CD4-positive, alpha-beta T cell (primary cell): ENCODE measurements at regions of chr13 and their contacts with region 1.

Region 1: DNA sequence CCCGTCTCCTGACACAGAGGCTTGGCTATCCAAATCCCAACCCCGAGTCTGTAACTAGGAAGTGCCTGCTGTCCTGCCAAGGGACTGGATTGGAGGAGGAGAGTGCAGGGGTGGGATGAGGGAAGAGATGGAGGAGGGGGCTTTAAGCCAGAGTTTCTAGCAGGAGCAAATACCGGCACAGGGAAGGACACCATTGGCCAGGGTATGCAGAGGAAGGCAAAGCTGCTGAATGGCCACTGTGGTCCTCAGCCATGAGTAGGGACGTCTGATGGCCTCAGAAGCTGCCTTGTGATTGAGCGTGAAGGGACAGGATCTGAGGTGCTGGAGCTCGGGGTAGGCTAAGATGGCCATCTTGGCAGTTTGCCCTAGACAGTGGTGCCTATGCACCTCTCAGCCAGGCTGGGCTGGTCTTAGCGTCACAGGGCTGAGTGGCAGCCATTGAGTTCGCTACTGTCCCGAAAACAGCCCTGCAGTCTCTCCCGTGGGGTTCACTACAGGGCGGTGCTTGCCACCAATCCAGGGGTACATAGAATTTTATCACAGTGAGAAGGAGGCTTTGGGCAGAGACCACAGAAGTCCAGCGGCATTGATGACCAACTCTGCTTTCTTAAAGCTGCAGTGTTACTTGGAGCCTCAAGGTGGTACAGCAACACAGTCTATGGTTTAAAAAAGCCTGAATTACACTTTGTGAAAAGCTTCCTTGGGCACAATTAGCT is 61.8 kb downstream of the AKAP11 start:
- DNase-seq: peak in 4 of 14 experiments; percentile 10 to 49 (median 44)
- ATAC-seq: peak; percentile 60
- H3K4me3 ChIP-seq: no peak overlapping the region
- H3K4me3 Mint-ChIP-seq: no peak overlapping the region
- H3K27ac ChIP-seq: no peak overlapping the region
- H3K27ac Mint-ChIP-seq: no peak overlapping the region
- H3K4me1 ChIP-seq: peaks cover 11% of the 10 kb centered on the region
- H3K4me1 Mint-ChIP-seq: peaks cover 25% of the 10 kb centered on the region
- H3K27me3 ChIP-seq: no peaks in the 10 kb centered on the region
- H3K27me3 Mint-ChIP-seq: no peaks in the 10 kb centered on the region
- CTCF ChIP-seq: peak; percentile 58

Region 2: DNA sequence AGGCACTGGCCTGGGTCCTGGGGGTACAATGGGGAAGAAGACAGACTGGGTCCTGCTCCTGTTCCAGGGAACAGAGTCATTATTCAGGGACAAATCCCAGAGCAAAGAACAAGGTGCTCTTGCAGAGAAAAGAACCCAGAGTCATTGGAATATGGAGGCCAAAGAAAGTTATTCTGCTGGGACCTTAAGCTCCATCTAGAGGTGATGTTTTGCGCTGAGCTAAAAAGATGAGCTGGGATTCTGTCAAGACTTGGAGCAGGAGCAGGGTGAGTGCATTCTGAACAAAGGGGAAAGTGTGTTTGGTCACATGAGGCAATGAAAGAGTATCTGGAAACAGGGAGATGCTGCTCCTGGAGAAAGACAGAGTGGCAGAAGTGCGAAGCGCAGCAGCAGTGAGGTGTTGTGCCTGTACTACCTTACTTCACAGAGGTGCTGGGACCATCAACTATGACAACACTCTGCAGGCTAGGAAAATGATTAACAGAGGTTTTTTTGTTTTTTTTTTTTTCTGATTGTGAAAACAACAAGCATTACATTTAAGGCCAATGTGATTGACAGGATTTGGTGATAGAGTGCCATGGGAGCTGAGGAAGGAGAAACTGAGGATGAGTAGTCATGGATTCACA is 144.9 kb after region 1 on chr13:
- CTCF ChIA-PET with region 1: interaction called, 9 read pairs
- POLR2A ChIA-PET with region 1: interaction called, 3 read pairs
- intact Hi-C with region 1: loop called (anchors 1 to 2 kb)
- DNase-seq: peak in 3 of 14 experiments; percentile 31 to 47 (median 34)
- ATAC-seq: no peak
- H3K4me3 ChIP-seq: no peak overlapping the region
- H3K4me3 Mint-ChIP-seq: no peak overlapping the region
- H3K27ac ChIP-seq: no peak overlapping the region
- H3K27ac Mint-ChIP-seq: no peak overlapping the region
- H3K4me1 ChIP-seq: no peaks in the 10 kb centered on the region
- H3K4me1 Mint-ChIP-seq: no peaks in the 10 kb centered on the region
- H3K27me3 ChIP-seq: no peaks in the 10 kb centered on the region
- H3K27me3 Mint-ChIP-seq: no peaks in the 10 kb centered on the region
- CTCF ChIP-seq: peak; percentile 27

Region 3: GRCh38 chr13:42594970-42595571 is 261.3 kb after region 1 on chr13:
- CTCF ChIA-PET with region 1: interaction called, 3 read pairs
- POLR2A ChIA-PET with region 1: no interaction called
- intact Hi-C with region 1: loop called (anchors 5 kb)
- DNase-seq: peak; percentile 7 to 73 (median 34)
- ATAC-seq: no peak
- H3K4me3 ChIP-seq: no peak overlapping the region
- H3K4me3 Mint-ChIP-seq: no peak overlapping the region
- H3K27ac ChIP-seq: no peak overlapping the region
- H3K27ac Mint-ChIP-seq: no peak overlapping the region
- H3K4me1 ChIP-seq: no peaks in the 10 kb centered on the region
- H3K4me1 Mint-ChIP-seq: no peaks in the 10 kb centered on the region
- H3K27me3 ChIP-seq: no peaks in the 10 kb centered on the region
- H3K27me3 Mint-ChIP-seq: no peaks in the 10 kb centered on the region
- CTCF ChIP-seq: peak; percentile 92

Region 4: GRCh38 chr13:43804461-43805070 is 1470.8 kb after region 1 on chr13:
- CTCF ChIA-PET with region 1: no interaction called
- POLR2A ChIA-PET with region 1: no interaction called
- intact Hi-C with region 1: loop called in 1 of 2 experiments (anchors 10 kb)
- DNase-seq: peak in 4 of 14 experiments; percentile 10 to 64 (median 60)
- ATAC-seq: no peak
- H3K4me3 ChIP-seq: no peak overlapping the region
- H3K4me3 Mint-ChIP-seq: no peak overlapping the region
- H3K27ac ChIP-seq: no peak overlapping the region
- H3K27ac Mint-ChIP-seq: no peak overlapping the region
- H3K4me1 ChIP-seq: no peaks in the 10 kb centered on the region
- H3K4me1 Mint-ChIP-seq: no peaks in the 10 kb centered on the region
- H3K27me3 ChIP-seq: peaks cover 0 to 4% of the 10 kb centered on the region in 2 experiments
- H3K27me3 Mint-ChIP-seq: peaks cover 22% of the 10 kb centered on the region
- CTCF ChIP-seq: peak; percentile 69